Activated CD4-positive, alpha-beta memory T cell treated with anti-CD3 and anti-CD28 coated beads for 36 hours (primary cell): ENCODE measurements at regions of chr6 and their contacts with region 1.

Region 1: DNA sequence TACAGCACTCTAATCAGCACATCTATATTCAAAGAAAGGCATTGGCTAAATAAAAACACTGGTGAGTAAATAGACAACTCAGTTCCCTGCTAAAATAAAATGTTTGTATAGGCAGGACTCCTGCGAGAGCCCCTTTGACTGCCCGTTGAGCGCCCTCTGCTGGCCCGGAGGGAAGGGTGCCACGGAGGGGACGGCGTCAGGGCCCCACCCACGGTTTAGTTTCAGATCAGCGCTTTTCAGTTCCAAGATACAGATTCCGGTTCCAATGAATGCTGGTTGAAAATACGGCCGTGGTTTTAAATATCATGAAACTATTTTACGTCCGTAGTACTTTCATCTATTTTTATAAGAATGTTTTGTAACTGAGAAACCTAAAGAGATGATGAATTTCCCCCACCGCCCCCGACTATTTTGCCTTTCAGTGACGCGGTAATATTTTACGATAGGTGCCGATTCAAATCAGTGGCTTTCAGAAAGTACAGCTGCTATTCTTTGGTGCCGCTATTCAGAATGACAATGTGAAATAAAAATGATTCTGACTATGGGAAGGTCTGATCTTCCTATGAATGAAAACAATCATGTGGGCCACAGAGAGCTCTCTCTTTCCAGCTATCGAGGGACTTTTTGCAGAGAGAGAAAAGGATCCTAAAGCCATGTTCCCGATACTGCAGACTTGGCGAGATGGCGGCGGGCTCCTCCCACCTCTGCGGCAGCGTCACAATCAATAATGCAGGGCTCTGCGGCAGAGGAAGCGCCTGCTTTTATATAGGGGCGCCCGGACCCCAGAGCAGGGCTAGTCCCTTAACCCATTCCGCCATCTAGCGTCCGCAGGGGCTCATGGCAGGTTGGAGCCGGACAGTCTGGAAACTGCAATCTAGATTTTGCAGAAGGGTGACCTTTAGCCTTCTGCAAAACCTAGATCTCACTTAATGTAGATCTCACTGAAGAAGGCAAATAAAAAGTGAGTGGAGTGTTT is 10.6 kb upstream of the CCN6 start:
- DNase-seq: peak; percentile 94
- H3K4me3 Mint-ChIP-seq: peak overlapping the region; percentile 84
- H3K27ac Mint-ChIP-seq: peak overlapping the region; percentile 96
- H3K4me1 Mint-ChIP-seq: peaks cover 41% of the 10 kb centered on the region
- H3K27me3 Mint-ChIP-seq: no peaks in the 10 kb centered on the region

Region 2: GRCh38 chr6:111011360-111012142 is 1031.8 kb before region 1 on chr6:
- CTCF ChIA-PET with region 1: no interaction called
- POLR2A ChIA-PET with region 1: no interaction called
- intact Hi-C with region 1: loop called (anchors 5 kb)
- DNase-seq: no peak
- H3K4me3 Mint-ChIP-seq: no peak overlapping the region
- H3K27ac Mint-ChIP-seq: no peak overlapping the region
- H3K4me1 Mint-ChIP-seq: peaks cover 4% of the 10 kb centered on the region
- H3K27me3 Mint-ChIP-seq: no peaks in the 10 kb centered on the region

Region 3: GRCh38 chr6:111483736-111484632 is 559.3 kb before region 1 on chr6:
- CTCF ChIA-PET with region 1: interaction called, 10 read pairs
- POLR2A ChIA-PET with region 1: no interaction called
- intact Hi-C with region 1: loop called (anchors 1 kb)
- DNase-seq: peak; percentile 92
- H3K4me3 Mint-ChIP-seq: peak overlapping the region; percentile 97
- H3K27ac Mint-ChIP-seq: peak overlapping the region; percentile 99
- H3K4me1 Mint-ChIP-seq: peaks cover 56% of the 10 kb centered on the region
- H3K27me3 Mint-ChIP-seq: no peaks in the 10 kb centered on the region

Region 4: DNA sequence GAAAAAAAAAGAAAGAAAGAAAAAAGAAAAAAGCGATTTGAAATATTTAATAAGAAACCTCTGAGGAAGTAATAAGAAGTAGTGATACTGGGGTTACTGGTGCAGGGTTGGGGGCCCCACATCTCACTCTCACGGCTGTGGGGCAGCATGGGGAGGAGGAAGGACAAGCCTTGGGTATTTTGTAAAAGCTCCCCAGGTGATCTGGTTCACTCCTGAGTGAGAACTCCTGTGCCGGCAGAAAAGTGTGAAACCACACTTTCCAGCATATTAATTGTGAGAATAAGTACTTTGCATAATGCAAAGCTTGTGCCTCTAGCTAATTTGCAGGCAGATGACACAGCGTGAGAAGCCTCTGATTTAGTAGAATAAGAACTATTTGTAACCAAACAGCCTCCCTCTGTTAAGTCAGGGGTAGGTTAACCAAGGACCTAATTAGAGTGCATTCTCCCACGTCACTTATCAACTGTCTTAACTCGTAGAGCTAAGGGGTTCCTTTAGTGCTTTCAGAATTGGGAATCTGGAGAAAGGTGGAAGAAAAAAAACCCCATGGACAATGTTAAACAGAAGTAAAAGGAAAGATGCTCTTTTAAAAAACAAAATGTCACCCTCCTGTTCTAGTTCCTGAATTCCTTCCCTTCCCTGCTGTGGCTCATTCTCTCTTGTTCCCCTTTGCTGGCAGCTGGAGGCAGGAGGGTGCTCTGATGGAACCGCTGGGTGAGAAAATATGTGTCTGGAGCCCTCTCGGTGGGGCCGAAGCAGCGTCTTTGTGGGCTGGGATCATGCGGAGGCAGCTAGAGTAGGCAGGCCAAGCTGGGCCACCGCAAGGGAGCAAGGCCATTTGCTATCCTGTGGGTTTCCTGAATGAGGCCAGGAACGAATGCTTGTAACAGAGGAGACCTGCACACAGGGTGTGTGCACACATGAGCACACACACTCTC is 278.8 kb before region 1 on chr6:
- CTCF ChIA-PET with region 1: interaction called, 10 read pairs
- POLR2A ChIA-PET with region 1: no interaction called
- intact Hi-C with region 1: no loop called
- DNase-seq: peak; percentile 80
- H3K4me3 Mint-ChIP-seq: peak overlapping the region; percentile 59
- H3K27ac Mint-ChIP-seq: peak overlapping the region; percentile 95
- H3K4me1 Mint-ChIP-seq: peaks cover 98% of the 10 kb centered on the region
- H3K27me3 Mint-ChIP-seq: no peaks in the 10 kb centered on the region

Region 5: GRCh38 chr6:111837641-111838500 is 205.4 kb before region 1 on chr6:
- CTCF ChIA-PET with region 1: interaction called, 6 read pairs
- POLR2A ChIA-PET with region 1: no interaction called
- intact Hi-C with region 1: loop called (anchors 1 kb)
- DNase-seq: peak; percentile 77
- H3K4me3 Mint-ChIP-seq: peak overlapping the region; percentile 54
- H3K27ac Mint-ChIP-seq: peak overlapping the region; percentile 91
- H3K4me1 Mint-ChIP-seq: peaks cover 37% of the 10 kb centered on the region
- H3K27me3 Mint-ChIP-seq: no peaks in the 10 kb centered on the region

Region 6: DNA sequence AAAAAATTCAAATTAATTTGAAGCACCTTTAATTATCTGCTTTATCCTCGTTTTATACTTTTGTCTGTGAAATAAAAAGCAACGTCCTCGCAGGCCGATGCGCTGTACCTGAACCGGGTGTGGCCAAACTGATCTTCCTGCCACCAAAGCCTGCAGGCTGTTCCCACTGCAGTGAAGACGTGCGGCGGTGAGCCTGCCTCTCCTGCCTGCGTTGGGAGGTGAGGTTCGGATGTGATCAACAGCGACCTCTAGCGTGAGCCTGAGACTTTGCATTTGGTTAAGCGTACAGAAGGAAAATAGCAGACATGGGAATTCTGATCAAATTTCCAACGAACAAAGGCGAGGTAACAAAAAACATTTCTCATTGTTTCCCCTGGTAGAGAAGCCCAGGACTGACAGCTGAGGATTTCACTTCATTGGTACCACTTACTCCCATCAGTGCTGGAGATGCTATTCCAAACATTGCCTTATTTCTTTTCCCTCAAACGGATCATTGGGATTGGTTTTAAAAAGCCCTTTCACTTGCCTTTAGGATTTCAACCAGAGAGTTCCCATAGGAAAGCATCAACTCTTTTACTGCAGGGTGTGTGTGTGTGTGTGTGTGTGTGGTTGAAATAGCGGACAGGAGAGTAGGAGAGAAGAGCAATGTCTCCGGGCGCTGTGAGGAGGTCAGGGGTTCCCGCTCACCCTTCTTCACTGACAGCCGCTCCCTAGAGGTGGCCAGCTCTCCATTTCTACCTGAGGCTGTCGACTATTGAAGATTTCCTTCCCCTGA is 46.1 kb before region 1 on chr6:
- CTCF ChIA-PET with region 1: interaction called, 6 read pairs
- POLR2A ChIA-PET with region 1: no interaction called
- intact Hi-C with region 1: loop called (anchors 1 kb)
- DNase-seq: peak; percentile 87
- H3K4me3 Mint-ChIP-seq: peak overlapping the region; percentile 48
- H3K27ac Mint-ChIP-seq: peak overlapping the region; percentile 28
- H3K4me1 Mint-ChIP-seq: peaks cover 48% of the 10 kb centered on the region
- H3K27me3 Mint-ChIP-seq: no peaks in the 10 kb centered on the region

Region 7: GRCh38 chr6:112029045-112029822 is 14.1 kb before region 1 on chr6:
- CTCF ChIA-PET with region 1: interaction called, 62 read pairs
- POLR2A ChIA-PET with region 1: no interaction called
- intact Hi-C with region 1: loop called (anchors 1 kb)
- DNase-seq: peak; percentile 86
- H3K4me3 Mint-ChIP-seq: no peak overlapping the region
- H3K27ac Mint-ChIP-seq: peak overlapping the region; percentile 89
- H3K4me1 Mint-ChIP-seq: peaks cover 70% of the 10 kb centered on the region
- H3K27me3 Mint-ChIP-seq: no peaks in the 10 kb centered on the region